Ovary (tissue), 10 donors: ENCODE measurements at regions of chr5 and their contacts with region 1.

Region 1: DNA sequence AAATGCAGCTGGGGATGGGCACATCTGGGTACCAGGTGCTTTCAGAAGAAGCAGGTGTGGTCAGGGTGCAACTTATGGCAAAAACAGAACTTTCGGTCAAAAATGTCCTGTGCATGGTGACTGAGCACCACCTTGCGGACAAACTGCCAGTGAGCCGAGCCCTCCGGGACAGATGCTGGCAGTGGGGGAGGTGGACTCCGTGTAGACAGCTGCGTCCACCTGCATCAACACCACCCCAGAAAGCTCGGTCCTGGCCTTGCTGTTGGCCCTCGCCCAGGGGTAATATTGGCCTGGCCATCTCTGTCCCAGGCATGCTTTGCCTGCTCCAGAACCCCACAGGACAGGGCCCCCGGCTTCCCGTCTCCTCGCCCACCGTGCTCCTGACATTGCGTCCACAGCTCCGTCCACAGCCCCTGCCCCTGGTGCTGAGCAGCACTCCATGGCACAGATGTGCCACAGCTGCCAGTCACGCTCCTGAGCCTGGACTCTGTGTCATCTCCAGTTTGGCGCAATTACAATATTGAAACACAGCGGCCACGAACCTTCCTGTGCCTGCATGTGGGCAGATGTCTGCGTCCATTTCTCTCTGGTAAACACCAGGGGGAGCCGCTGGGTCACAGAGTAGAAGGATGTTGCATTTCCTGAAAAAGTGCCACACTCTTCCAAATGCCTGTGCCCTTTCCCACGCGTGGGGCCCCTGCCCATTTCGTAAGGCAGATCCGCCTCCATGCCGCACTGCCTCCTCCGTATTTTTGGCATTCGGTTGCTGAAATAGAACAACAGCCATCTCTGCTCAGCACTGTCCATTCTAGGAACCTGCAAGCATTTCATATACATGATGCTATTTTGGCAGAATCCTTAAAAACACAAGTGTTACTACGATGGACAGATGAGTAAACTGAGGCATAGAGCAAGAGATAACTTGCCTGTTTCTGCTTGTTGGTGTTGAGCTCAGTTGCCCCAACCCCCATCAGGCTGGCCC is 33.4 kb upstream of the SLC6A19 start:
- DNase-seq: peak; percentile 62 to 72 (median 70)
- H3K4me3 ChIP-seq: no peak overlapping the region
- H3K27ac ChIP-seq: no peak overlapping the region
- H3K4me1 ChIP-seq: peaks cover 3% of the 10 kb centered on the region
- H3K27me3 ChIP-seq: no peaks in the 10 kb centered on the region
- CTCF ChIP-seq: peak; percentile 14 to 46 (median 46)
- EP300 ChIP-seq: no peak
- POLR2A ChIP-seq: no peak

Region 2: DNA sequence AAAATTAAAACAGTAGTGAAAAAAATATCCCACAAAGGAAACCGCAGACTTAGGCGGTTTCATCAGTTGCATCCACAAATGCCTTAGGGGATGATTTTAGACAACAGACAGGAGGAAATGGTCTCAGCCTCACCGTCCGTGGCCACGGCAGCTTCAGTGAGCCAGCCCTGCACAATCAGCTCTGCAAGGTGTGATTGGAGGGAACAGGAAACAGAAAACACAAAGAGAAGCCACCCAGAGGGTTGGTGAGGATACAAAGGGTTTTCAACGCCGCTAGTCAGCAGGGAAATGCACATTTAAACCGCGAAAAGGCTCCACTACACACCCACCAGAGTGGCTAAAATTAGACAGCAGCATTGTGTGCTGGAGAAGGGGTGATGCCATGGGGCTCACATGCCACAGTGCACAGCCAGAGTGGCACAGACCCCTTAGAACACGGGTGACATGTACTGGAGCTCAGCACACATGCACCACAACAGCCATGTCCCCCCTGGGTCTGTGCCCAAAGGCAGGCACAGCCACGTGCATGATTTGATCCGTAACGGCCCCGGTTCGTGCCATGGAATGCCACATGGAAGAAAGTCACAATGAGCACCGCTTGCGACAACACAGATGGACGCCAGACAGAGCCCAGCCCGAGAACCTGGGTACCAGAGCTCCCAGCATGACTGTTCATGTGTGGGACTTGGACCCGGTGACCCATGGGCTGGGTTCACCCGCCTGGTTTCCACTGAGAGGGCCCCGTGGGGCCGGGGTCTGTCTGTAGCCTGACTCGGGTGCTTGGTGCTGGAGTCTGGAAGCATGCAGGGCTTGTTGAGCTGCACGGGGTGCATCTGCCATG is 145.2 kb after region 1 on chr5:
- intact Hi-C with region 1: loop called in 1 of 4 experiments (anchors 5 kb)
- DNase-seq: peak in 1 of 5 donors; percentile 24
- H3K4me3 ChIP-seq: no peak overlapping the region
- H3K27ac ChIP-seq: no peak overlapping the region
- H3K4me1 ChIP-seq: no peaks in the 10 kb centered on the region
- H3K27me3 ChIP-seq: no peaks in the 10 kb centered on the region
- CTCF ChIP-seq: no peak
- EP300 ChIP-seq: no peak
- POLR2A ChIP-seq: no peak